ENCODE measurements at regions of chr12 and their contacts with region 1.

Region 1: GRCh38 chr12:41333974-41334373 is 145.9 kb downstream of the PDZRN4 start:
- DNase-seq: no peak
- H3K4me3 ChIP-seq: no peak overlapping the region
- H3K27ac ChIP-seq: no peak overlapping the region
- H3K4me1 ChIP-seq: no peaks in the 10 kb centered on the region
- H3K27me3 ChIP-seq: no peaks in the 10 kb centered on the region
- CTCF ChIP-seq: no peak
- EP300 ChIP-seq: no peak
- POLR2A ChIP-seq: no peak

Region 2: DNA sequence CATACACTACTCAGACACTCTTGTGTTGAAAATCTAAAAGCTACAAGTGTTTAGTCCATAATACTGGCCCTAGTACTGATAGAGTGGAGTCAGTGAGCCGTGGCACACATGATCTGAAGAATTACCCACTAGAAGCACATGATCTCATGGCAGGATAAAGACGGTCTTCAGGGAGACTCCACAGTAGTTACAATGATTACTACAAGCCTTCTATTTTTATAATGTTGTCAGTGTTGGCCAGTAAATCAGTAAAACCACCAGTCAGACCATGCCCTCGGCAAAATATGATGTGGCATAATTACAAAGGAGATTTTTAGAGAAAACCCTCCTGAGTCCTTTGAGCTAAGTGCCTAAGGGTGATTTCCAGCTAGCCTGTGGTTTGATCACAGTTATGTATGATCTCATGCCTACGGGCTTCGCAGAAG is 31.0 kb before region 1 on chr12:
- in situ Hi-C with region 1: no loop called
- intact Hi-C with region 1: loop called (anchors 1 kb)
- DNase-seq: no peak
- H3K4me3 ChIP-seq: no peak overlapping the region
- H3K27ac ChIP-seq: no peak overlapping the region
- H3K4me1 ChIP-seq: no peaks in the 10 kb centered on the region
- H3K27me3 ChIP-seq: no peaks in the 10 kb centered on the region
- CTCF ChIP-seq: no peak
- EP300 ChIP-seq: no peak
- POLR2A ChIP-seq: no peak

Measured in transverse colon (tissue), 4 donors.